Aorta (tissue), 5 donors: ENCODE measurements at regions of chr2 and their contacts with region 1.

Region 1: GRCh38 chr2:100875516-100876230 is 55.7 kb downstream of the NPAS2 start:
- DNase-seq: no peak
- ATAC-seq: peak; percentile 48
- H3K4me3 ChIP-seq: no peak overlapping the region
- H3K27ac ChIP-seq: peak overlapping the region in 1 of 2 donors; percentile 65
- H3K4me1 ChIP-seq: peaks cover 0 to 2% of the 10 kb centered on the region in 2 donors
- H3K27me3 ChIP-seq: no peaks in the 10 kb centered on the region

Region 2: GRCh38 chr2:100742277-100743254 is 133.1 kb before region 1 on chr2:
- intact Hi-C with region 1: loop called in 1 of 2 experiments (anchors 5 kb)
- DNase-seq: no peak
- ATAC-seq: peak; percentile 29
- H3K4me3 ChIP-seq: no peak overlapping the region
- H3K27ac ChIP-seq: peak overlapping the region in 1 of 2 donors; percentile 41
- H3K4me1 ChIP-seq: peaks cover 0 to 3% of the 10 kb centered on the region in 2 donors
- H3K27me3 ChIP-seq: no peaks in the 10 kb centered on the region